HEK293T (cell line): ENCODE measurements at regions of chr7 and their contacts with region 1.

Region 1: DNA sequence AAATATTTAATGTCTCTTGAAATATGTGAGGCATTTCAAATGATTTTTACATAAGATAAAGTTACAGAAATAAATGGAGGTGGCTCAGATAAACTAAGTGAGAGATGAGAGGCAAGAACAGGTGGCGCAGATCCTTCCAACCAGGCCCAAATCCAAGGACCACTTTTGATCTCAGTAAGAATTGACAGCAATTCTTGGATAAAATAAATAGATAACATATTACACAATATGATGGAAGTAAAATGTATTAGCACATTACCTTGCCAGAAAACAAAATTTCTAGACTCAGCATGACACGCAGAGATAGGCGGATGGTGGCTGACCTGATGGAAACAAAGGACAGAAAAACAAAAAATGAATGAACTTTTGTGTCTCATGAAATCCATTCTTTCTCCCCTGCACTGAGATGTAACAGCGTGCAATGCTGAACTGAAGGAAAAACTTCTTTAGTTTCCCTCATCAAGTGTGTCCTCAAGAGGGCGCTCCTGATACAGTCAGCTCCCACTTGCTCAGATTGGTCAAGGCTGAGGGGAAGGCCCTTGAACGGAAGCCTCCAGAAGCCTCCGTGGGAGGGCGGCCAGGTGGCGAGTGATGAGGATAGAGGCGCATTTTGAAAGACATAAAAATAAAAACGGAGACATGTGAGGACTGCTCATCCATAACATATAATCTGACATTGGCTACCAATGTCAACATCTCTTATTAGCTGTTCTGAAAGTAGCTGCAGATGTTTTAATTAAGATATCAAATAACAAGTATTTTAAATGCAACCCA is 62.8 kb upstream of the GSDME start:
- DNase-seq: peak; percentile 78

Region 2: DNA sequence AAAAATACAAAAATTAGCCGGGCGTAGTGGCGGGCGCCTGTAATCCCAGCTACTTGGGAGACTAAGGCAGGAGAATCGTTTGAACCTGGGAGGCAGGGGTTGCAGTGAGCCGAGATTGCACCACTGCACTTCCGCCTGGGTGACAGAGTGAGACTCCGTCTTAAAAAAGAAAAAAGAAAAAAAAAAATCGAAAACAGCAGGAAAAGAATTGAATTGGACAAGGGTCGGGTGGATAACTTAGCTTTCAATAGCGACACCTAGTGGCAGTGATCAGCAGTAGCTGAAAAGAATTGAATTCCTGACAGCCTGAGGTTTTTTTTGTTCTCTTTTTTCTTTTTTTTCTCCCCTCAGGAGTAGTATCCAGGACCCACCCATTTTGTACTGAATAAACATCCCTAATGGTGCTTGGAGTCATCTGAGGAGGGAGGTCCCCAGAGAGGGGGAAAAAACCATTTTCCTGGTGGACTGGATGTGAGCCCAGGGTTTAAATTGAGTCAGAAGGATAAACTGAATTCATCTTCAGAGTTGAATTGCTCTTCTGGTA is 249.9 kb after region 1 on chr7:
- CTCF ChIA-PET with region 1: interaction called, 12 read pairs
- POLR2A ChIA-PET with region 1: no interaction called
- DNase-seq: peak; percentile 76